ENCODE measurements at regions of chr1 and their contacts with region 1.

Region 1: DNA sequence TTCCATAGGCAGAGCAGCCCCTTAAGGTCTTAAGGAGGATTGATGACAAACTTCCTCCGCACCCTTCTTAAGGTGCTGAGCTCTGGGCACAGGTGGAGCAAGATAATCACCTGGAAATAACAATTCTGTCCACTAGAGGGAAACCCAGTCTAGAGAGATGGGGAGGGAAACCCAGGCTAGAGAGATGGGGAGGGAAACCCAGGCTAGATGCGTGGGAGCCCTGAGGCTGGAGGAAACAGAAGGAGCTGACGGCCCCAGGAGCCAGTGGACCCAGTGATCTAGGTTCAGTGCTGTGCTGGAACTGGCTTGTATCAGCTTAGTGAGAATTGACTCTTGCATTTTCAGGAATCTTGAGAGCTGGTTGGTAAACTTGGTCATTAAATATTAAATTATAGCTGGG is 17.8 kb upstream of the MYCL start:
- DNase-seq: no peak
- H3K4me3 ChIP-seq: no peak overlapping the region
- H3K27me3 ChIP-seq: no peaks in the 10 kb centered on the region; the same call in none of the 2 replicates
- CTCF ChIP-seq: peak; percentile 62

Region 2: GRCh38 chr1:39691262-39692151 is 228.0 kb before region 1 on chr1 and contains the start of gene HPCAL4:
- CTCF ChIA-PET with region 1: no interaction called
- POLR2A ChIA-PET with region 1: no interaction called
- DNase-seq: peak; percentile 5
- H3K4me3 ChIP-seq: no peak within 1 kb of the TSS; the same call in 1 of the 2 replicates
- H3K27me3 ChIP-seq: peaks cover 52% of the 10 kb centered on the region
- CTCF ChIP-seq: no peak
- polyA plus RNA-seq, gene HPCAL4: not detected in 2 replicates

Region 3: GRCh38 chr1:39907528-39908453 is 11.8 kb before region 1 on chr1:
- CTCF ChIA-PET with region 1: interaction called, 56 read pairs
- POLR2A ChIA-PET with region 1: no interaction called
- DNase-seq: no peak
- H3K4me3 ChIP-seq: no peak overlapping the region
- H3K27me3 ChIP-seq: peaks cover 4% of the 10 kb centered on the region
- CTCF ChIP-seq: no peak

Region 4: GRCh38 chr1:39954816-39955546 is 35.4 kb after region 1 on chr1 and contains the start of gene MFSD2A:
- CTCF ChIA-PET with region 1: interaction called, 10 read pairs
- POLR2A ChIA-PET with region 1: no interaction called
- DNase-seq: peak; percentile 52
- H3K4me3 ChIP-seq: peak within 1 kb of the TSS; percentile 52
- H3K27me3 ChIP-seq: no peaks in the 10 kb centered on the region
- CTCF ChIP-seq: no peak
- polyA plus RNA-seq, gene MFSD2A: 0.94 and 2.0 TPM in 2 replicates

Region 5: GRCh38 chr1:39973503-39974135 is 54.1 kb after region 1 on chr1:
- CTCF ChIA-PET with region 1: interaction called, 228 read pairs
- POLR2A ChIA-PET with region 1: no interaction called
- DNase-seq: no peak
- H3K4me3 ChIP-seq: no peak overlapping the region
- H3K27me3 ChIP-seq: no peaks in the 10 kb centered on the region
- CTCF ChIP-seq: peak; percentile 98

Region 6: DNA sequence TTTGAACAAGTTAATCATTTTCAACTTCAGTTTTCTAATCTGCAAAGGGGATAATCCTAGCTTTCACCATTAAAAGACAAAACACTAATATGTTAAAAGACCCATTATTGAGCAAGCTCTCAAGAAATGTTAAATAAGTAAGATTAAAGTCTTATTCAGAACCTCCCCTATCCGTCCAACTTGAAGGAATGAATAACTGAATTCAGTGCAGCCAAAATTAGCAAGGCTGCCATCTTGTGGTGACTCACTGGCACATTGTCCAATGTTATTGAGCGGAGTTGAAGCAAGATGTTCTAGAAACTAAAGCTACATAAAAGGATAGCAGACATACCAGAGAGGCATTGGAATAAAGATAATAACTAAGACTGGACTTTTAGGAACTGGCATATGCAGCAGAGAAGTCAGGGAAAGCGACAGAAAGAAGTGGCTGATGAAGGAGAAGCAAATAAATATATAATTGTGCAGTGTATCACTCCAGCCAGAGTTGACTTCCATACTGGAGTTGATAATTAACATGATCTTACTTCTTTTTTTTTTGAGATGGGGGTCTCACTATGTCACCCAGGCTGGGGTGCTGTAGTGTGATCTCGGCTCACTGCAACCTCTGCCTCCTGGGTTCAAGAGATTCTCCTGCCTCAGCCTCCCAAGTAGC is 112.8 kb after region 1 on chr1:
- CTCF ChIA-PET with region 1: interaction called, 92 read pairs
- POLR2A ChIA-PET with region 1: no interaction called
- DNase-seq: no peak
- H3K4me3 ChIP-seq: no peak overlapping the region
- H3K27me3 ChIP-seq: no peaks in the 10 kb centered on the region; the same call in 1 of the 2 replicates
- CTCF ChIP-seq: peak; percentile 64

Measured in BJ (cell line).